Esophagus muscularis mucosa (tissue), 4 donors: ENCODE measurements at regions of chr6 and their contacts with region 1.

Region 1: GRCh38 chr6:75275067-75275466 is 9.5 kb downstream of the TMEM30A start:
- DNase-seq: no peak
- H3K4me3 ChIP-seq: no peak overlapping the region
- H3K27ac ChIP-seq: no peak overlapping the region
- H3K4me1 ChIP-seq: peaks cover 33 to 85% (median 78%) of the 10 kb centered on the region in 4 donors
- H3K27me3 ChIP-seq: no peaks in the 10 kb centered on the region
- CTCF ChIP-seq: no peak
- EP300 ChIP-seq: no peak
- POLR2A ChIP-seq: no peak

Region 2: DNA sequence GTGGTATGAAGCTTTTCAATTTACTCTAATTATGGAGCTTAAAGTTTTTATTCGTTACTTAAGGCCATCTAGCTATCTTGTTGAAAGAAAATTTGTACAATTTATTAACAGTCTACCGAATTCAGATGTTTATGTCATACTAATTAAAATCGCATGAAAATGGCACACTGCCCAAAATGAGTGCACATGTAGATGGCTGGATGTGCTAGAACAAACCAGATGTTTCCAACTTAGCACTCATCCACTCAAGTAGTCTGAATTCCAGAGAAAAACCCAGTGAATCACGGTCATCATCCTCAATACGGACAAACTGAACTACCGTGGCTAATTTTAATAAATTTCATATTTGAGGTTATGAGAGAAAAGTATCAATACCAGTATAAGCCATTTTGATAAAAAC is 139.6 kb before region 1 on chr6:
- intact Hi-C with region 1: no loop called
- DNase-seq: no peak
- H3K4me3 ChIP-seq: no peak overlapping the region
- H3K27ac ChIP-seq: no peak overlapping the region
- H3K4me1 ChIP-seq: peaks cover 0 to 5% (median 3%) of the 10 kb centered on the region in 4 donors
- H3K27me3 ChIP-seq: no peaks in the 10 kb centered on the region
- CTCF ChIP-seq: no peak
- EP300 ChIP-seq: no peak
- POLR2A ChIP-seq: no peak

Region 3: DNA sequence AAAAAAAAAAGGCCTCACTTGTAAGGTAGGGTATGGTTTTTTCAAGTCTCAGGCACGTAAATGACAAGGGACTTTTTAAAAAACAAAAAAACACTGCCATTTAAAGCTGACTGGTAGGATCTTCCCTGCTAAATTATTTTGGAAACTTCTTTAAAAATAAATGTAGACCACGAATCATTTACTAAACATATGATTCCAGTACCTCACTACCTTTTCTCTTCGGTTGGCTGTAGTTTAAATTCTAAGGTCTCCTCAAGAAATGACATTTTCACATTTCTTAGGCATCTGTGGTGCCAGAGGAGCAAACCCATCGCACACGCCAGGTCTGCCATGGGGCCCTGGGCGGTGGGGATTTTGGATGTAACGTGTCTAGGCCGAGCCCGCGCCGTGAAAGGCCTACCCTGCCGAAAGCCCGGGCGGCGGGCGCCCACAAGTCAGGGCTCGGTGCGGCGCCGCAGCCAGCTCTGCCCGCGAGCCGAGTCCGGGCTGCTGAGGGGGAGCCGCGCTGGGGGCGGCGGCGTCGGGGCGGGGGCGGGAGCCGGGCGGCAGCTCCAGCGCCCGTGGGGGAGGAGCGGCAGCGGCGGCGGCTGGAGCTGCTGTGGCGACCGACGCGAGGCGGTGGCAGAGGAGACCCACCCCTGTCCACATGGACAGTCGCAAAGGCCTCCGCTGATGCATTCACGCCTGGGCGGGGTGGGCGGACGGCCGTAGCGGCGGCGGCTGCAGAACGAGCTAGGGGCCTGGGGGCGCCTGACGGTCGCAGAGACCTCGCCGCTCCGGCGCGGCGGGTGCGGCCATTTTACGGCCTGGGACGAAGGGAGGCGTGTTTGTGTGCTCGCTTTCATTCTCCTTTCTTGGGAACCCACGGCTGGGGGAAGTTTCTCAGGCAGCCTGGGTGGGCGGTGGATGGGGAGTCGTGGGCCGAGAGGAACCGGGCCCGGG is 326.5 kb after region 1 on chr6 and contains the start of gene SENP6:
- intact Hi-C with region 1: loop called (anchors 10 kb)
- DNase-seq: peak; percentile 93
- H3K4me3 ChIP-seq: peak within 1 kb of the TSS; percentile 87 to 95 (median 92)
- H3K27ac ChIP-seq: peak within 1 kb of the TSS; percentile 96 to 100 (median 96)
- H3K4me1 ChIP-seq: peaks cover 15 to 68% (median 64%) of the 10 kb centered on the region in 4 donors
- H3K27me3 ChIP-seq: no peaks in the 10 kb centered on the region
- CTCF ChIP-seq: no peak
- EP300 ChIP-seq: no peak
- POLR2A ChIP-seq: peak; percentile 48
- total RNA-seq, gene SENP6: 91.8 to 145 (median 107) TPM